PC-9 (cell line): ENCODE measurements at regions of chr1 and their contacts with region 1.

Region 1: GRCh38 chr1:51878616-51879336 is at the start of gene NRDC:
- DNase-seq: peak; percentile 99
- H3K4me3 ChIP-seq: peak within 1 kb of the TSS; percentile 98
- H3K27ac ChIP-seq: peak within 1 kb of the TSS; percentile 91
- H3K4me1 ChIP-seq: peaks cover 31% of the 10 kb centered on the region
- H3K27me3 ChIP-seq: no peaks in the 10 kb centered on the region
- CTCF ChIP-seq: no peak
- total RNA-seq, gene NRDC: 217 and 219 TPM in 2 replicates

Region 2: GRCh38 chr1:51235673-51236530 is 642.9 kb before region 1 on chr1 and contains the start of gene RNF11:
- CTCF ChIA-PET with region 1: no interaction called
- POLR2A ChIA-PET with region 1: interaction called, 11 read pairs
- intact Hi-C with region 1: loop called (anchors 2 kb)
- DNase-seq: peak; percentile 71 to 91
- H3K4me3 ChIP-seq: peak within 1 kb of the TSS; percentile 99
- H3K27ac ChIP-seq: peak within 1 kb of the TSS; percentile 54
- H3K4me1 ChIP-seq: peaks cover 56% of the 10 kb centered on the region
- H3K27me3 ChIP-seq: no peaks in the 10 kb centered on the region
- CTCF ChIP-seq: no peak
- total RNA-seq, gene RNF11: 63.0 and 73.2 TPM in 2 replicates

Region 3: GRCh38 chr1:51840743-51841461 is 37.9 kb before region 1 on chr1:
- CTCF ChIA-PET with region 1: no interaction called
- POLR2A ChIA-PET with region 1: interaction called, 10 read pairs
- intact Hi-C with region 1: no loop called
- DNase-seq: peak in 1 of 2 experiments; percentile 3
- H3K4me3 ChIP-seq: no peak overlapping the region
- H3K27ac ChIP-seq: no peak overlapping the region
- H3K4me1 ChIP-seq: peaks cover 12% of the 10 kb centered on the region; the same call in 1 of the 2 replicates
- H3K27me3 ChIP-seq: no peaks in the 10 kb centered on the region
- CTCF ChIP-seq: no peak

Region 4: GRCh38 chr1:52056163-52056936 is 177.6 kb after region 1 on chr1 and contains the start of gene BTF3L4:
- CTCF ChIA-PET with region 1: no interaction called
- POLR2A ChIA-PET with region 1: no interaction called
- intact Hi-C with region 1: loop called (anchors 2 kb)
- DNase-seq: peak; percentile 89 to 94
- H3K4me3 ChIP-seq: peak within 1 kb of the TSS; percentile 95
- H3K27ac ChIP-seq: peak within 1 kb of the TSS; percentile 93
- H3K4me1 ChIP-seq: peaks cover 39% of the 10 kb centered on the region
- H3K27me3 ChIP-seq: no peaks in the 10 kb centered on the region
- CTCF ChIP-seq: no peak
- total RNA-seq, gene BTF3L4: 47.0 and 48.6 TPM in 2 replicates